K562 (cell line): ENCODE measurements at regions of chr17 and their contacts with region 1.

Region 1: GRCh38 chr17:34542700-34543336 is 36.6 kb upstream of the TMEM132E start:
- DNase-seq: peak; percentile 43 to 79 (median 69)
- ATAC-seq: peak; percentile 67
- H3K4me3 ChIP-seq: no peak overlapping the region
- H3K27ac ChIP-seq: no peak overlapping the region
- H3K4me1 ChIP-seq: no peaks in the 10 kb centered on the region
- H3K27me3 ChIP-seq: peaks cover 5 to 17% of the 10 kb centered on the region in 2 experiments; a peak in 3 of 5 replicates
- CTCF ChIP-seq: peak; percentile 76 to 89 (median 89)
- EP300 ChIP-seq: no peak
- POLR2A ChIP-seq: no peak
- RAD21 ChIP-seq: peak; percentile 75 to 89

Region 2: GRCh38 chr17:34637548-34638525 is 95.0 kb after region 1 on chr17:
- CTCF ChIA-PET with region 1: interaction called, 7 read pairs
- POLR2A ChIA-PET with region 1: no interaction called
- in situ Hi-C with region 1: no loop called
- intact Hi-C with region 1: loop called (anchors 2 kb)
- DNase-seq: peak; percentile 82 to 86 (median 83)
- ATAC-seq: peak; percentile 99
- H3K4me3 ChIP-seq: no peak overlapping the region
- H3K27ac ChIP-seq: no peak overlapping the region
- H3K4me1 ChIP-seq: peaks cover 0 to 13% of the 10 kb centered on the region in 2 experiments; a peak in 1 of 5 replicates
- H3K27me3 ChIP-seq: peaks cover 6 to 65% of the 10 kb centered on the region in 2 experiments; a peak in 4 of 5 replicates
- CTCF ChIP-seq: peak; percentile 83 to 89 (median 85)
- EP300 ChIP-seq: no peak
- POLR2A ChIP-seq: no peak
- RAD21 ChIP-seq: peak; percentile 46 to 75

Region 3: GRCh38 chr17:34886831-34887230 is 344.0 kb after region 1 on chr17:
- CTCF ChIA-PET with region 1: no interaction called
- POLR2A ChIA-PET with region 1: no interaction called
- in situ Hi-C with region 1: loop called (anchors 10 kb)
- intact Hi-C with region 1: loop called (anchors 2 kb)
- DNase-seq: peak in 2 of 4 experiments; percentile 57 to 72
- ATAC-seq: peak; percentile 73
- H3K4me3 ChIP-seq: no peak overlapping the region
- H3K27ac ChIP-seq: no peak overlapping the region
- H3K4me1 ChIP-seq: peaks cover 21 to 31% of the 10 kb centered on the region in 2 experiments; a peak in 3 of 5 replicates
- H3K27me3 ChIP-seq: peaks cover 0 to 17% of the 10 kb centered on the region in 2 experiments; a peak in 1 of 5 replicates
- CTCF ChIP-seq: no peak
- EP300 ChIP-seq: peak; percentile 88
- POLR2A ChIP-seq: no peak
- RAD21 ChIP-seq: no peak

Region 4: DNA sequence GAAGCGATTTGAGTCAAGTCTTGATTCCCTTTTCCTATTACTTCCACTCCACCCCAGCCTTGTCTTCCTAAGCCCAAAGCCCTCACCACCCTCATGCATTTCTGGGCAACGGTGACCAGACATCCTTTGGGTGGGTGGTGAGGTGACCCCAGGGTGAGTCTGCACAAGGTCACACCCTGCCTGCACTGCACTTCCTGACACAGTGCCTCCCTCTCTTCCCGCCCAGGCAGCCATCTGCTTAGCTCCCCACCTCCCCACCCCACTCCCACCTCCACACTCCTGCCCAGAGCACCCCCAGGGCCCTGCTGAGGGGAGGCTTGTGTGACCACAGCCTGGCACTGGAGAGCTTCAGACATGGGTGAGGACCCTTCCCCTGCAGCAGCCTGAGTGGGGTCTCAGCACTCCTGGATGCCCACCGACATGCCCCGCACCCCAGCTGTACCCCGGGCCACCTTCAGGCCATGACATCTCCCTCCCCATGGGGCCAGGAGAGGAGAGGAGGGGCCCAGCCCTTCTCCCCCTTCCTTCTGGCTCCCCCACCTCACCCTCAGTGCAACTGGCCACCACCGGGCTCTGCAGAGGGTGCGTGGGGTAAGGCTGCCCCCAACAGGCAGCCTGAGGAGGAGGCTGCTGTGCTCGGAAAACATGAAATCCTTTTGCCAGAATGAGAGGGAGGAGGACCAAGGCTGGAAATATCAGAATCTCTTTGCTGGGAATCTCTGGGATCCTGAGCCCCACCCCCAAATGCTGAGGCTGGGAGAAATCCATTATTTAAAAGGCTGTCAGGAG is 349.8 kb after region 1 on chr17:
- CTCF ChIA-PET with region 1: no interaction called
- POLR2A ChIA-PET with region 1: no interaction called
- in situ Hi-C with region 1: loop called (anchors 10 kb)
- intact Hi-C with region 1: loop called (anchors 2 kb)
- DNase-seq: peak; percentile 57 to 75 (median 64)
- ATAC-seq: peak; percentile 90
- H3K4me3 ChIP-seq: no peak overlapping the region
- H3K27ac ChIP-seq: no peak overlapping the region
- H3K4me1 ChIP-seq: peaks cover 0 to 8% of the 10 kb centered on the region in 2 experiments; a peak in 4 of 5 replicates
- H3K27me3 ChIP-seq: peaks cover 0 to 32% of the 10 kb centered on the region in 2 experiments; a peak in 2 of 5 replicates
- CTCF ChIP-seq: peak; percentile 79 to 87 (median 83)
- EP300 ChIP-seq: no peak
- POLR2A ChIP-seq: no peak
- RAD21 ChIP-seq: peak; percentile 61 to 84